ENCODE measurements at regions of chr4 and their contacts with region 1.

Region 1: GRCh38 chr4:174813292-174813691 is 15.8 kb downstream of the GLRA3 start:
- DNase-seq: no peak
- H3K4me3 ChIP-seq: no peak overlapping the region
- H3K27ac ChIP-seq: no peak overlapping the region
- H3K4me1 ChIP-seq: no peaks in the 10 kb centered on the region
- H3K27me3 ChIP-seq: no peaks in the 10 kb centered on the region
- CTCF ChIP-seq: no peak

Region 2: GRCh38 chr4:174826660-174827059 is 13.4 kb after region 1 on chr4:
- CTCF ChIA-PET with region 1: no interaction called
- POLR2A ChIA-PET with region 1: no interaction called
- intact Hi-C with region 1: loop called (anchors 1 kb)
- DNase-seq: no peak
- H3K4me3 ChIP-seq: no peak overlapping the region
- H3K27ac ChIP-seq: no peak overlapping the region
- H3K4me1 ChIP-seq: no peaks in the 10 kb centered on the region
- H3K27me3 ChIP-seq: no peaks in the 10 kb centered on the region
- CTCF ChIP-seq: peak; percentile 31; the same call in 1 of the 2 replicates